ENCODE measurements at regions of chr16 and their contacts with region 1.

Region 1: GRCh38 chr16:20763461-20764232 is at the start of gene ACSM3:
- DNase-seq: peak in 9 of 10 donors; percentile 50 to 83 (median 72)
- ATAC-seq: peak; percentile 98
- H3K4me3 Mint-ChIP-seq: peak within 1 kb of the TSS; percentile 84 to 97 (median 94)
- H3K27ac Mint-ChIP-seq: peak within 1 kb of the TSS; percentile 63 to 98 (median 96)
- H3K4me1 Mint-ChIP-seq: peaks cover 15 to 37% (median 32%) of the 10 kb centered on the region in 4 donors
- H3K27me3 Mint-ChIP-seq: no peaks in the 10 kb centered on the region
- polyA plus RNA-seq, gene ACSM3: 7.9 to 15.7 (median 14.8) TPM

Region 2: GRCh38 chr16:20741554-20742285 is 21.9 kb before region 1 on chr16 and contains the start of gene THUMPD1:
- POLR2A ChIA-PET with region 1: interaction called, 11 read pairs
- DNase-seq: peak; percentile 89 to 98 (median 95)
- ATAC-seq: peak; percentile 88 to 92
- H3K4me3 Mint-ChIP-seq: peak within 1 kb of the TSS; percentile 91 to 99 (median 95)
- H3K27ac Mint-ChIP-seq: peak within 1 kb of the TSS; percentile 94 to 99 (median 98)
- H3K4me1 Mint-ChIP-seq: peaks cover 5 to 32% (median 28%) of the 10 kb centered on the region in 4 donors
- H3K27me3 Mint-ChIP-seq: no peaks in the 10 kb centered on the region
- polyA plus RNA-seq, gene THUMPD1: 63.8 to 74.2 (median 69.4) TPM

Region 3: GRCh38 chr16:20814784-20815183 is 51.1 kb after region 1 on chr16:
- POLR2A ChIA-PET with region 1: no interaction called
- DNase-seq: no peak
- ATAC-seq: no peak
- H3K4me3 Mint-ChIP-seq: no peak overlapping the region
- H3K27ac Mint-ChIP-seq: no peak overlapping the region
- H3K4me1 Mint-ChIP-seq: no peaks in the 10 kb centered on the region
- H3K27me3 Mint-ChIP-seq: peaks cover 0 to 4% (median 0%) of the 10 kb centered on the region in 5 donors

Measured in naive thymus-derived CD8-positive, alpha-beta T cell (primary cell).